ENCODE measurements at regions of chr19 and their contacts with region 1.

Region 1: GRCh38 chr19:3062168-3063102 is at the start of gene TLE5:
- DNase-seq: peak; percentile 64 to 86 (median 72)
- ATAC-seq: peak; percentile 55 to 61
- H3K4me3 Mint-ChIP-seq: peak within 1 kb of the TSS; percentile 80 to 99 (median 91)
- H3K27ac Mint-ChIP-seq: peak within 1 kb of the TSS; percentile 91 to 98 (median 95)
- H3K4me1 Mint-ChIP-seq: peaks cover 14 to 61% (median 36%) of the 10 kb centered on the region in 4 donors
- H3K27me3 Mint-ChIP-seq: no peaks in the 10 kb centered on the region
- polyA plus RNA-seq, gene TLE5: 451 to 924 (median 555) TPM

Region 2: GRCh38 chr19:2950286-2951124 is 111.9 kb before region 1 on chr19:
- POLR2A ChIA-PET with region 1: interaction called, 30 read pairs
- DNase-seq: peak; percentile 99 to 100 (median 100)
- ATAC-seq: peak; percentile 95 to 96
- H3K4me3 Mint-ChIP-seq: peak overlapping the region; percentile 91 to 98 (median 96)
- H3K27ac Mint-ChIP-seq: peak overlapping the region; percentile 95 to 99 (median 98)
- H3K4me1 Mint-ChIP-seq: peaks cover 9 to 30% (median 28%) of the 10 kb centered on the region in 4 donors
- H3K27me3 Mint-ChIP-seq: no peaks in the 10 kb centered on the region

Region 3: GRCh38 chr19:2977001-2977685 is 85.3 kb before region 1 on chr19 and contains the start of gene TLE6:
- POLR2A ChIA-PET with region 1: interaction called, 12 read pairs
- DNase-seq: peak; percentile 86 to 97 (median 94)
- ATAC-seq: peak; percentile 99
- H3K4me3 Mint-ChIP-seq: peak within 1 kb of the TSS; percentile 93 to 98 (median 97)
- H3K27ac Mint-ChIP-seq: peak within 1 kb of the TSS; percentile 48 to 95 (median 86)
- H3K4me1 Mint-ChIP-seq: peaks cover 12 to 24% (median 19%) of the 10 kb centered on the region in 4 donors
- H3K27me3 Mint-ChIP-seq: peaks cover 2 to 10% (median 5%) of the 10 kb centered on the region in 5 donors
- polyA plus RNA-seq, gene TLE6: 0.52 to 0.82 TPM in 2 of 3 donors, not detected in the other

Region 4: DNA sequence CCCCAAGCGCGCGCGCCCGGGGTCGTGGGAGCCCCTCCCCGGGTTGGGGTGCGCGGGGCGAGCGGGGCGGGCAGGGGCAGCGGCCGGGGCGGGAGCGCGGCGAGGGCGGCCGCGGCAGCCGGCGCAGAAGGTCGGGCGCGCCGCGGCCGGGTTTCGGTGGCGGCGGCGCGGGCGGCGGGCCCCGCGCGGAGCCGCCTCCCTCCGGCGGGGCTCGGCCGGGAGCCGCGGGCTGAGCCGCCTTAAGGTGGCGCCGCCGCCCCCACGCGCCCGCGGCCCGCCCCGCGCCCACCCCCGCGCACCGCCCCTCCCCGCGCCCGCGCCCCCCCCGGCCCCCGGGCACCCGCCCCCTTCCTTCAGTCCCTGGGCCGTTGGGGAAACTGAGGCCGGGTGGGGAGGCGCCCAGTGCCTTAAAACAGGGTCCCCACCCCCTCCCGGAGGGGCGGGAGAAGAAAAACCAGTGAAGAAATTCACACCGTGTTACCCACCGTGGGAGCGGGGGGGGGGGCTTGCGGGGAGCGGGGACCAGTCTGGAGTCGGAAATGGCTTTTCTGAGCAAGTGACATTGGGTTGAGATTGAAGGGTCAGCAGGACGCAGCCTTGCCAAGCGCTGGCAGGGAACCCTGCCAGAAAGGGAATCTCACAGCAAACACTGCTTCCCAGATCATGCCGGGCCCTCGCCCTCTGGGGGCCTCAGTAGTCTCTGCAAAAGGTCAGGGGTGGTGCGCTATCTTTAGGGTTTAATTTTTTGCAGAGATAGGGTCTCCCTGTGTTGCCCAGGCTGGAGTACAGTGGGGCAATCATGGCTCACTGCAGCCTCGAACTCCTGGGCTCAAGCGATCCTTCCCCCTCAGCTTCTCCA is 33.1 kb before region 1 on chr19 and contains the start of gene TLE2:
- POLR2A ChIA-PET with region 1: interaction called, 519 read pairs
- DNase-seq: peak in 1 of 10 donors; percentile 41
- ATAC-seq: peak; percentile 62 to 78
- H3K4me3 Mint-ChIP-seq: peak within 1 kb of the TSS; percentile 70 to 91 (median 82)
- H3K27ac Mint-ChIP-seq: peak within 1 kb of the TSS in 9 of 10 donors; percentile 36 to 81 (median 62)
- H3K4me1 Mint-ChIP-seq: peaks cover 27 to 38% (median 31%) of the 10 kb centered on the region in 4 donors
- H3K27me3 Mint-ChIP-seq: peaks cover 0 to 8% (median 0%) of the 10 kb centered on the region in 5 donors
- polyA plus RNA-seq, gene TLE2: 7.0 to 12.4 (median 10.8) TPM

Region 5: DNA sequence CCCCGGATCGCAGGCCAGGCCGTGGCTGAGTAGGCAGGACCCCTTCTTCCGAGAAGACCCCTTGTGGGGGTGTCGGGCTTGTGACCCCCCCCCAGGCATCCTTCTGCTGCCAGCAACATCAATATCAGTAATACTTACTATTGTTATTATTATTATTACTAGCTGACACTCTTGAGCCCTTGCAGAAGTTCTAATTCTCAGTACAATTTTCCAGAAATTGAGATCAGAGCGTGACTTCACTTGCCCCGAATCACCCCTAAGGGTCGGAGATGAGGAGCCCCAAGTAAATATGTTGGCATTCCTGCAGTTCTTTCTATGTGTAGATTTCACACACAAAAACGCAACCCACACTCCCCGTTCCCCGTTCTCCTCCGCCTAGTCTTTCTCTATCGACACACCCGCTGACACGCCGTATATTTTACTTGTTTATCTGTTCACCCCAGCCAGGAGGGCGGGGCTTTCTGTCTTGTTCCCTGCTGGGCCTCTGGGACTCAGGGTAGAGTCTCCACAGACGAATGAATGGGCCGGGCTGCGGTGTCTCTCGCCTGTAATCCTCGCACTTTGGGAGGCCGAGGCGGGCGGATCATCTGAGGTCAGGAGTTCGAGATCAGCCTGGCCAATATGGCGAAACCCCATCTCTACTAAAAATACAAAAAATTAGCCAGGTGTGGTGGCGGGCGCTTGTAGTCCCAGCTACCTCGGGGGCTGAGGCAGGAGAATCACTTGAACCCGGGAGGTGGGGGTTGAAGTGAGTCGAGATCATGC is 14.8 kb before region 1 on chr19:
- POLR2A ChIA-PET with region 1: interaction called, 519 read pairs
- DNase-seq: peak; percentile 48 to 83 (median 62)
- ATAC-seq: peak; percentile 87 to 91
- H3K4me3 Mint-ChIP-seq: peak overlapping the region; percentile 86 to 97 (median 92)
- H3K27ac Mint-ChIP-seq: peak overlapping the region; percentile 83 to 97 (median 94)
- H3K4me1 Mint-ChIP-seq: peaks cover 12 to 33% (median 29%) of the 10 kb centered on the region in 4 donors
- H3K27me3 Mint-ChIP-seq: peaks cover 0 to 2% (median 0%) of the 10 kb centered on the region in 5 donors

Region 6: GRCh38 chr19:3084943-3085342 is 22.5 kb after region 1 on chr19:
- POLR2A ChIA-PET with region 1: no interaction called
- DNase-seq: no peak
- ATAC-seq: no peak
- H3K4me3 Mint-ChIP-seq: no peak overlapping the region
- H3K27ac Mint-ChIP-seq: no peak overlapping the region
- H3K4me1 Mint-ChIP-seq: no peaks in the 10 kb centered on the region
- H3K27me3 Mint-ChIP-seq: no peaks in the 10 kb centered on the region

Region 7: GRCh38 chr19:3102228-3103140 is 40.0 kb after region 1 on chr19:
- POLR2A ChIA-PET with region 1: interaction called, 11 read pairs
- DNase-seq: no peak
- ATAC-seq: no peak
- H3K4me3 Mint-ChIP-seq: no peak overlapping the region
- H3K27ac Mint-ChIP-seq: no peak overlapping the region
- H3K4me1 Mint-ChIP-seq: peaks cover 13 to 26% (median 21%) of the 10 kb centered on the region in 4 donors
- H3K27me3 Mint-ChIP-seq: peaks cover 0 to 5% (median 0%) of the 10 kb centered on the region in 5 donors

Region 8: GRCh38 chr19:3176603-3177501 is 114.4 kb after region 1 on chr19:
- POLR2A ChIA-PET with region 1: interaction called, 15 read pairs
- DNase-seq: peak in 7 of 10 donors; percentile 41 to 82 (median 53)
- ATAC-seq: peak; percentile 45 to 56
- H3K4me3 Mint-ChIP-seq: peak overlapping the region; percentile 72 to 91 (median 87)
- H3K27ac Mint-ChIP-seq: peak overlapping the region; percentile 80 to 99 (median 96)
- H3K4me1 Mint-ChIP-seq: peaks cover 12 to 40% (median 27%) of the 10 kb centered on the region in 4 donors
- H3K27me3 Mint-ChIP-seq: no peaks in the 10 kb centered on the region

Region 9: DNA sequence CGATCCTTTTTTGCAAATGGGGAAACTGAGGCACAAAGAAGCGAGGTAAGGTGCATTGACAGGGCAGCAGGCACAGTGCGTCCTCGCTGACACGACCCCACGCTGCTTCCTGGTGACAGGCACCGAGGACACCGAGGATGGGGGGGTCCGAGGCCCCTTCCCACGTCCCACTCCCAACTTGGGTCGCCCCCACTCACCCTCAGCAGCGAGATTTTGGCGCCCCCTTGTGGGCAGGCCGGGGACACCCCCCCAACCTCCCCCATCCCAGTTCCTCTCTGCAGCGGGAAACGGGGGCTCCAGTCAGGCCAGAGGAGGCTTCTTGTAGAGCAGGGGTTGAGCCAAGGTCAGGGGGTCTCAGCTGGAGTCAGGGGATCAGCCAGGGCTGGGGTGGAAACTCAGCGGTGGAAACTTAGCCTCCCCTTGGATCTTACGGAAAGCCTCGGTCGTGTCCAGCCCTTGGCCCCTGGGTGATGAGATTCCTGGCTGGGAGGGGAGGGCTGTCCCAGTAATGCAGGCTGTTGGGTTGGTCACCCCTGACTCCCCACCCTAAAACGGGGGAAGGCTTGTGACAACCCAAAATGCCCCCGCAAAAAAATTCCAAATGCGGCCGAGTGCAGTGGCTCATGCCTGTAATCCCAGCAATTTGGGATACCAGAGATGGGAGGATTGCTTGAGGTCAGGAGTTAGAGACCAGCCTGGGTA is 409.7 kb after region 1 on chr19:
- POLR2A ChIA-PET with region 1: no interaction called
- DNase-seq: peak in 8 of 10 donors; percentile 16 to 43 (median 34)
- ATAC-seq: peak in 1 of 2 donors; percentile 46
- H3K4me3 Mint-ChIP-seq: no peak overlapping the region
- H3K27ac Mint-ChIP-seq: peak overlapping the region in 1 of 10 donors; percentile 29
- H3K4me1 Mint-ChIP-seq: peaks cover 0 to 2% (median 0%) of the 10 kb centered on the region in 4 donors
- H3K27me3 Mint-ChIP-seq: no peaks in the 10 kb centered on the region